AG04450 (cell line): ENCODE measurements at regions of chr5 and their contacts with region 1.

Region 1: GRCh38 chr5:175729829-175730277 is 72.0 kb downstream of the HRH2 start:
- DNase-seq: peak; percentile 81
- H3K4me3 ChIP-seq: no peak overlapping the region
- H3K27ac ChIP-seq: no peak overlapping the region
- H3K27me3 ChIP-seq: peaks cover 10% of the 10 kb centered on the region
- CTCF ChIP-seq: peak; percentile 96

Region 2: GRCh38 chr5:175378444-175379028 is 351.3 kb before region 1 on chr5:
- CTCF ChIA-PET with region 1: no interaction called
- POLR2A ChIA-PET with region 1: no interaction called
- DNase-seq: peak; percentile 32
- H3K4me3 ChIP-seq: no peak overlapping the region
- H3K27ac ChIP-seq: no peak overlapping the region
- H3K27me3 ChIP-seq: no peaks in the 10 kb centered on the region
- CTCF ChIP-seq: no peak

Region 3: DNA sequence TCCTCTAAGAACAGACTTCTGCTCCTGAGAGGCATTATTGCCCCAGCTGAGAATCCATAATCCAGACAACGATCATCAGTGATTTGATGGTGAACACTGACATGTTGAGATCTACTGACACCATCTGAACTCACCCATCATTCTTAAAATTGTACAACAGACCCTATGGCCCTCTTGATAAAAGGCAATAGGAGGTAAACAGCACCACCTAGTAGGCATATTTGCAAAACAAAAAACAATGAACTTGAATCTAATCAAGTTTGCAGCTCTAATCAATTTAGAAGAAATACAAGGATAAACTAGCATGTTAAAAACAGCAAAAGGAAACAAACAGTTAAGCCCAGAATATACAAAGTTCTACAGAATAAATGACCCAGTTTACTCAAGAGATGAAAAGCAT is 161.9 kb before region 1 on chr5:
- CTCF ChIA-PET with region 1: no interaction called
- POLR2A ChIA-PET with region 1: no interaction called
- DNase-seq: no peak
- H3K4me3 ChIP-seq: no peak overlapping the region
- H3K27ac ChIP-seq: no peak overlapping the region
- H3K27me3 ChIP-seq: no peaks in the 10 kb centered on the region
- CTCF ChIP-seq: no peak

Region 4: DNA sequence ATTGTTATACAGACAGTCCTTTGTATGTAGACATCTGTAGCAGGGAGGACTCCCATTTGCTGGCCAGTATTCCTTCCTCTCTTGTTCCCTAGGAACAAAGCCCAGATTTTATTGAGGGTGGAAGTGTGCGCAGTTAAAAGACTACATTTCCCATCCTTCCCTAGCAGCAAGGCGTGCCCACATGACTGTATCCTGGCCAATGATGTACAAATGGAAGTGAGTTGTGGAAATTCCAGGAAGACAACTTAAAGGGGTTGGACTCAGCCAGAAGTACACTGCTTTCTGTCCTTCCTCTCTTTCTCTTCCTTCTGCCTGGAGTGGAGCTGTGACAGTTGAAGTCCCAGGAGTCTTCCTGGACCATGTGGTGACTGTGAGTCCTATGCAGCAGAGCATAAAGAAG is 17.0 kb after region 1 on chr5:
- CTCF ChIA-PET with region 1: interaction called, 13 read pairs
- POLR2A ChIA-PET with region 1: no interaction called
- DNase-seq: no peak
- H3K4me3 ChIP-seq: no peak overlapping the region
- H3K27ac ChIP-seq: no peak overlapping the region
- H3K27me3 ChIP-seq: no peaks in the 10 kb centered on the region
- CTCF ChIP-seq: no peak

Region 5: GRCh38 chr5:176162198-176162597 is 432.3 kb after region 1 on chr5:
- CTCF ChIA-PET with region 1: no interaction called
- POLR2A ChIA-PET with region 1: no interaction called
- DNase-seq: no peak
- H3K4me3 ChIP-seq: no peak overlapping the region
- H3K27ac ChIP-seq: no peak overlapping the region
- H3K27me3 ChIP-seq: no peaks in the 10 kb centered on the region
- CTCF ChIP-seq: no peak

Region 6: GRCh38 chr5:176361437-176362232 is 631.8 kb after region 1 on chr5 and contains the start of gene KIAA1191:
- CTCF ChIA-PET with region 1: interaction called, 10 read pairs
- POLR2A ChIA-PET with region 1: no interaction called
- DNase-seq: peak; percentile 63
- H3K4me3 ChIP-seq: peak within 1 kb of the TSS; percentile 95
- H3K27ac ChIP-seq: peak within 1 kb of the TSS; percentile 39
- H3K27me3 ChIP-seq: no peaks in the 10 kb centered on the region
- CTCF ChIP-seq: peak; percentile 30; the same call in 1 of the 2 replicates
- polyA plus RNA-seq, gene KIAA1191: 98.3 and 113 TPM in 2 replicates

Region 7: GRCh38 chr5:176793337-176794138 is 1063.7 kb after region 1 on chr5:
- CTCF ChIA-PET with region 1: no interaction called
- POLR2A ChIA-PET with region 1: no interaction called
- DNase-seq: no peak
- H3K4me3 ChIP-seq: no peak overlapping the region
- H3K27ac ChIP-seq: no peak overlapping the region
- H3K27me3 ChIP-seq: peaks cover 61% of the 10 kb centered on the region
- CTCF ChIP-seq: no peak